ENCODE measurements at regions of chr3 and their contacts with region 1.

Region 1: DNA sequence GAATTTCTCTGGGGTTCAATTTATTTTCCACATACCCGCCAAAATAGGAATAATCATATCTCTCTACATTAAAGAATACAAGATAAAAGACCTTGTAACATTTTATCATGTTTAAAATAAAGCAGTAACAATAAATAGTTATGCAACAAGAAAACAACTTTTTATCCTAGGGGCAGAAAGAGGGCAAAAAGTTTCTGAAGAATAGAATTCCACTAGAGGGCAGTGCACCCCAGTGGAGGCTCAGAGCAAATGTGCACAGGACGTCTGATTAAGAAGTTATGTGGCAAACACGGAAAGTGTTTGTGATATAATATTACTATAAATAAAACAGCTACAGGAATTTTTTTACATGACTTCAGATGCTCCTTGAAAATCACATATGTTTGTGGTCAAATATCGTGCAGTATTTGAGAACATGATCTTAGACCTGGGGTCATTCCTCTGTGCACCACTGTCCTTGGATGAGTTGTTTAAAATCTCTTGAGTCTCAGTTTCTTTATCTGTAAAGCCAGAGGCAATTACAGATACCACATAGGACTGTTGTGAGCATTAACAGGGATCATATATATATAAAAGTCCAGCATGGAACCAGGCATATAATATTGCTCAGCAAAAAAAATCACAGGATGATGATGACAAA is 13.2 kb upstream of the PIK3R4 start:
- H3K4me3 ChIP-seq: no peak overlapping the region
- H3K27ac ChIP-seq: no peak overlapping the region
- H3K4me1 ChIP-seq: no peaks in the 10 kb centered on the region
- CTCF ChIP-seq: no peak

Region 2: DNA sequence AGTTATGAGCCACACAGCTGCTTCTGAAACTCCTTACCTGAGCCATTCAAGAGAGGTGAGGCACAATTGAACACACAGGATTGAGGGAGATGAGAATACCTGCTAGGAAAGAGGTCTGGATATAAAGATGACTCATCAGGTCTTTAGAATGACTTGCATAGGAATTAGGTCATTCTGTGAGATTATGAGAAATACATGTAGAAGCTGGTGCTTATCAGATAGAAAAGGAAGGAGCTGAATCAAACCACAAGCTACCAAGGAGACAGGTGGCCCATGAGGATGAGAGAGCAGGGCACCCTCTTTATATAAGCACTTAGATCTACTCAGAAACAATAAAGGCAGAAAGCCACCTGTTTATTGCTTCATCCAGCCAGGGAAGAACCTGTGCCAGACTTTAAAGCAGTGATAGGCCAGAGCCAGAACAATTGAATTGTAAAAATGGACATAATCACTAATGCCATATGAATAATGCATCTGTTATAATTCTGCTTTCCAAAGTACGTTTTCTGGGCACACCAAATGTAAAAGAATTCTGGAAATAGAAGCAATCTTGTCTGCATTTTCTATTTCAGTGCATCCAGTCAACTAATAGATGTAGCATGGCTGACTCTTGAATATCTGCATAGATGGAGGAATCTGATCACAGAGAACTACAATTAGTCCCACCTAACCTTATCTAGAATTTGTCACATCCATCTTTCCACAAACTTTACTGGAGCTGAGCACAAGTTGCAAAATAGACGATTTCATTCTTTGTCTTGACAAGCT is 88.1 kb before region 1 on chr3:
- CTCF ChIA-PET with region 1: no interaction called
- POLR2A ChIA-PET with region 1: no interaction called
- H3K4me3 ChIP-seq: no peak overlapping the region
- H3K27ac ChIP-seq: no peak overlapping the region
- H3K4me1 ChIP-seq: no peaks in the 10 kb centered on the region
- CTCF ChIP-seq: no peak

Region 3: GRCh38 chr3:130772129-130772528 is 12.3 kb after region 1 on chr3:
- CTCF ChIA-PET with region 1: interaction called, 13 read pairs
- POLR2A ChIA-PET with region 1: no interaction called
- H3K4me3 ChIP-seq: no peak overlapping the region
- H3K27ac ChIP-seq: no peak overlapping the region
- H3K4me1 ChIP-seq: peaks cover 3% of the 10 kb centered on the region; the same call in 1 of the 2 replicates
- CTCF ChIP-seq: no peak

Region 4: DNA sequence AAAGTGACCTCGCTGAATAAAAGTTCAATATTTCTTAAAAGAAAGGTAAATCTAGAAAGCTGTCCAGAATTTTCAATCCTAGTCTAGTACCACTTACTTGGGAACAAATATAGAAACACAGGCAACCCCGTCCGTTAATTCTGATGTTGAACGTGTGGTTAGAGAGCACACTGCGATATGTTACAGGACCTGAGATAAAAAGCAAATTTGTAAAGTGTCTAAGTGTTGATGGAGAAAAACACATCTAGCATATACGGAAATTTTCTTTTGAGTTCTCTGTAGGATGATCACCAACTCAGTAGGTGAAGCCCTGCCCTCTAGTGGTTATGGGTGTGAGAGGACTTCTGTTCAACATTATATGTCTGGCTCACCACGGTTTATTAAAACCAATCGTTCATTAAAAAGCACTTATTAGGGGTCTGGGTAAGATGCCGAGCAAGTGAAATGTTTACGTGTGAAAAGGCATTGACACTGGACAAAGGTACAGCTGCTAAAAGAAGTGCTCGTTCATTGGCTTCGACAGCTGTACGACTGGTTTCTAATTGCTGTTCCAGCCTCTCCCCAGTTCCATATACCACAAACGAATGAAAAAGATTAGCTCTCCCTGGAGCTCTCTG is 133.0 kb after region 1 on chr3:
- CTCF ChIA-PET with region 1: interaction called, 61 read pairs
- POLR2A ChIA-PET with region 1: interaction called, 10 read pairs
- H3K4me3 ChIP-seq: peak overlapping the region; percentile 95
- H3K27ac ChIP-seq: peak overlapping the region; percentile 83; the same call in 1 of the 2 replicates
- H3K4me1 ChIP-seq: peaks cover 3% of the 10 kb centered on the region; the same call in 1 of the 2 replicates
- CTCF ChIP-seq: peak; percentile 48

Measured in HEK293 (cell line).